ENCODE measurements at regions of chr16 and their contacts with region 1.

Region 1: DNA sequence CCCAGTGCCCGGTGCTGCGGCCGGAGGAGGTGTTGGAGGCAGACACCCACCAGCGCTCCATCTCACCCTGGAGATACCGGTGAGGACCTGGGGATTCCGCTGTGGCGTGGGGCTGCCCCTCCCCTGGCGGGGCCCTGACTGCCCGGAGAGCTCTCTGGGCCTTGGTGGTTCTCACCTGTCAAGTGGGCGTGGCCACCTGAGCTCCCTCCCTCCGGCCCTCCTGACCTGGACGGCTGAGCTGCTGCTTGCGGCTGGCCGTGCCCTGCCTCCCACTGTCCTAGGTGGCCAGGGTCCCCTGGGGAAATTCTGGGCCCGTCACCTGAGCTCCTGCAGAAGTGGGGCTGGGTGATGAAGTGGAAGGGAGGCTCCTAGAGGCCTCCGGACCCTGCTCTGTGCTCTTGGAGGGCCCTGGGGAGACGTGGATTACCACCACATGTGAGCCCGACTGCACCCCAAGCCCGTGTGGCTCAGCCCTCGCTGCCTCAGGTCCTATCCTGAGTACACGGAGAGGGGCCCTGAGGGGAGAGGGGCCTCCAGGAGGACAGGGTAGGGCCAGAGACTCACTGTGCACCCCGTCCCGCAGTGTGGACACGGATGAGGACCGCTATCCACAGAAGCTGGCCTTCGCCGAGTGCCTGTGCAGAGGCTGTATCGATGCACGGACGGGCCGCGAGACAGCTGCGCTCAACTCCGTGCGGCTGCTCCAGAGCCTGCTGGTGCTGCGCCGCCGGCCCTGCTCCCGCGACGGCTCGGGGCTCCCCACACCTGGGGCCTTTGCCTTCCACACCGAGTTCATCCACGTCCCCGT is 1.1 kb downstream of the IL17C start:
- DNase-seq: no peak
- ATAC-seq: no peak
- H3K4me3 Mint-ChIP-seq: no peak overlapping the region
- H3K27ac Mint-ChIP-seq: no peak overlapping the region
- H3K4me1 Mint-ChIP-seq: peaks cover 20% of the 10 kb centered on the region
- H3K27me3 Mint-ChIP-seq: peaks cover 33% of the 10 kb centered on the region

Region 2: DNA sequence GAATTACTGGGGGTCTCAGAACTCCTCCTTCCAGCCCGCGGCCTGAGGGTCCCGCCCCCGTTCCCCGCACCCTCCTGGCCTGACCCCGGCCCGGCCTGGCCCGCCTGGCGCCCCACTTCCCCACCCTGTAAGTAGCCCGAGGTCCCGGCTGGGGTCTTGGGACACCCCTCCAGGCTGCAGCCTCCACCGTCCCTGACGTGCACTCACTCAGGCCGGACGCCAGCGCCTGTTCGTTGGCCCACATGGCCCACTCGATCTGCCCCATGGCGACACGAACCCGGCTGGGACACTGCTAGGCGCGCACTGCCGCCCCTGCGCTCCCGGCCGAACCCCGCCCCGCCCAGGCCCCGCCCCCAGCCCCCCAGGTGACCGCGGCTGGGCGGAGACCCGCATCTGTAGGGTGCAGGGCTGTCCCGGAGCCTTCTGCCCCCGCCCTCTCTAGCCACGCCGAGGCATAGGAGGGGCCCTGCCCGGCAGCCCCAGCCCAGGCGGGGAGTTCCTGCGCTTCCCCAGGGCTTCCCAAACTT is 11.4 kb after region 1 on chr16 and contains the start of gene CYBA:
- POLR2A ChIA-PET with region 1: interaction called, 14 read pairs
- DNase-seq: peak; percentile 94
- ATAC-seq: peak; percentile 87
- H3K4me3 Mint-ChIP-seq: peak within 1 kb of the TSS; percentile 91
- H3K27ac Mint-ChIP-seq: peak within 1 kb of the TSS; percentile 96
- H3K4me1 Mint-ChIP-seq: peaks cover 9% of the 10 kb centered on the region
- H3K27me3 Mint-ChIP-seq: no peaks in the 10 kb centered on the region
- total RNA-seq, gene CYBA: 505 to 513 TPM

Measured in activated naive CD8-positive, alpha-beta T cell treated with anti-CD3 and anti-CD28 coated beads, Interleukin-2, amount 10 ng/mL, durations not matched to agents 7 days and 5 days (primary cell).